Testis (tissue), 5 donors: ENCODE measurements at regions of chr16 and their contacts with region 1.

Region 1: GRCh38 chr16:56729735-56730662 is at the start of gene NUP93:
- DNase-seq: peak; percentile 94
- H3K4me3 ChIP-seq: peak within 1 kb of the TSS; percentile 80 to 90
- H3K27ac ChIP-seq: peak within 1 kb of the TSS; percentile 76 to 79
- H3K4me1 ChIP-seq: peaks cover 6% of the 10 kb centered on the region
- H3K27me3 ChIP-seq: no peaks in the 10 kb centered on the region
- CTCF ChIP-seq: no peak
- POLR2A ChIP-seq: no peak
- total RNA-seq, gene NUP93: 94.2 to 102 TPM

Region 2: GRCh38 chr16:56848056-56848936 is 118.3 kb after region 1 on chr16:
- intact Hi-C with region 1: loop called (anchors 10 kb)
- DNase-seq: no peak
- H3K4me3 ChIP-seq: no peak overlapping the region
- H3K27ac ChIP-seq: peak overlapping the region; percentile 9 to 74
- H3K4me1 ChIP-seq: peaks cover 25% of the 10 kb centered on the region
- H3K27me3 ChIP-seq: no peaks in the 10 kb centered on the region
- CTCF ChIP-seq: no peak
- POLR2A ChIP-seq: no peak